Dorsolateral prefrontal cortex (tissue), 120 donors: ENCODE measurements at regions of chr17 and their contacts with region 1.

Region 1: DNA sequence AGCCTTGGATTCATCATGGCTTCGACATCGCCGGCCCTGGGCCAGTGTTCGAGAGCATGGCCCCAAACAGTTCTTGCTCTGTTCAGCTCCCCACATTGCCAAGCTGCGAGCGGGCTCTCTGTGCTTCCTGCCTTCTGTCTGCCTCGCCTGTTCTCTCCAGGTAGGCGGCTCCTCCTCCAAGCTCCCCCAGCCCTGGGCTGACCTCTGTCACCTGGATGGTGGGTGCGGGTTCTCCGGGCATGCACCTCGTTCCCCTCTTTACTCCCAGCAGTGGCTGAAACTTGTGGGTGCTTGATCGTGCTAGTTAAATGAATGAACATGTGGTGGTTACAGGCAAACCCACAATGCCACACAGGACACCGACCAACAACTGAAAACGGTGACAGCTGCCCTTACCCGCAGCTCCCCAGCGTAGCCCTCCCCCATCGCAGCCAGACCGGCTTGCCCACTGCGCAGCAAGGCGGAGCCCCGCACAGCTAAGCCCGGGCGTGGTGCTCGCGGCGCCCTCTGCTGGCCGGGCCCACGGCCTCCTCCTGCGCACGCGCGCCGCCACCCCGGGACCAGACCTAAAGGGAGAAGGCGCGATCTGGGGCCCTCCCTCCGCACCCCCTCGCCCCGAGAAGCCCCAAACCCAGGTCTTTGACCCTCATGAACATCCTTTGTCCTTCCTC is 23.0 kb upstream of the EIF1 start:
- DNase-seq: peak; percentile 73 to 94 (median 85)
- H3K4me3 ChIP-seq: peak overlapping the region; percentile 38 to 78 (median 60)
- H3K27ac ChIP-seq: peak overlapping the region in 58 of 59 donors; percentile 62 to 97 (median 88)
- H3K27me3 ChIP-seq: no peaks in the 10 kb centered on the region
- CTCF ChIP-seq: peak; percentile 81 to 100 (median 96)

Region 2: DNA sequence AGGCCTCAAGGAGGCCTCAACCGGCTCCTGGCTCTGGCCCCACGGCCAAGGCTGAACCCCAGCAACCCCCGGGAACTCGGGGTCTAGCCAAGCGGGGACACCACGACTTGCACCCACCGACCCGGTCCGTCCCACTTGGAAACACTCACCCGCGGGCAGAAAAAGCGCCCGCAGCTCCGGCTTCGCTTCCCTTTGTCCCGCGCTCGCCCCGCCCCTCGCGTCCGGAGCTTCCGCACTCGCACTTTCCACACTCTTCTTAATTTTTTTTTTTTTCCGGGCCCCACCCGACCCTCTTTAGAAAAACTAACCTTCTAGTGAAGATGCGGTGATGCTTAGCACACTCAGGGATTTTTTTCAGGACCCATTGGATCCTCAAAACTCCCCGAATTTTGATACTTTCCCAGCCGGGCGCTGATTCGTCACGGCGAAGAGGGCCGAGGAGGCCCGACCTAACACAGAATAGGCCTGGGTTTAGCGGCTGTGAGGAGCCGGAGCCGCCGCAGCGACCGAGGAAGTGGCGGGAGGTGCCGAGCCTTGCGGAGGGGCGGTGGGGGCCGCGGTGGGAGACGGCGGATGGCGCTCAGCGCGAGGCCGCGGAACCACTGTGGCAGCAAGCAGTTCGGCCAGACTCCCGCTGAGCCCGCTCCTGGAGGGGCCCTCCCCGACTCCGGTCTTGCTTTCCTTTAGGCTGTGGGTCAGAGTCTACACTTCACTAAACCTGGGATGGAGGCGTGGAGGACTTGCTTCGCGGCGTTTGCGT is 1017.9 kb before region 1 on chr17 and contains the start of gene SMARCE1:
- intact Hi-C with region 1: loop called in 1 of 2 experiments (anchors 10 kb)
- DNase-seq: peak; percentile 44 to 76 (median 61)
- H3K4me3 ChIP-seq: peak within 1 kb of the TSS; percentile 69 to 98 (median 90)
- H3K27ac ChIP-seq: peak within 1 kb of the TSS; percentile 78 to 99 (median 97)
- H3K27me3 ChIP-seq: no peaks in the 10 kb centered on the region
- CTCF ChIP-seq: peak in 22 of 56 donors; percentile 3 to 49 (median 22)
- total RNA-seq, gene SMARCE1: 34.6 to 67.5 (median 47.0) TPM

Region 3: GRCh38 chr17:40857535-40857934 is 808.2 kb before region 1 on chr17:
- intact Hi-C with region 1: loop called in 1 of 2 experiments (anchors 5 kb)
- DNase-seq: no peak
- H3K4me3 ChIP-seq: no peak overlapping the region
- H3K27ac ChIP-seq: no peak overlapping the region
- H3K27me3 ChIP-seq: peaks cover 0 to 10% (median 0%) of the 10 kb centered on the region in 45 donors
- CTCF ChIP-seq: no peak

Region 4: DNA sequence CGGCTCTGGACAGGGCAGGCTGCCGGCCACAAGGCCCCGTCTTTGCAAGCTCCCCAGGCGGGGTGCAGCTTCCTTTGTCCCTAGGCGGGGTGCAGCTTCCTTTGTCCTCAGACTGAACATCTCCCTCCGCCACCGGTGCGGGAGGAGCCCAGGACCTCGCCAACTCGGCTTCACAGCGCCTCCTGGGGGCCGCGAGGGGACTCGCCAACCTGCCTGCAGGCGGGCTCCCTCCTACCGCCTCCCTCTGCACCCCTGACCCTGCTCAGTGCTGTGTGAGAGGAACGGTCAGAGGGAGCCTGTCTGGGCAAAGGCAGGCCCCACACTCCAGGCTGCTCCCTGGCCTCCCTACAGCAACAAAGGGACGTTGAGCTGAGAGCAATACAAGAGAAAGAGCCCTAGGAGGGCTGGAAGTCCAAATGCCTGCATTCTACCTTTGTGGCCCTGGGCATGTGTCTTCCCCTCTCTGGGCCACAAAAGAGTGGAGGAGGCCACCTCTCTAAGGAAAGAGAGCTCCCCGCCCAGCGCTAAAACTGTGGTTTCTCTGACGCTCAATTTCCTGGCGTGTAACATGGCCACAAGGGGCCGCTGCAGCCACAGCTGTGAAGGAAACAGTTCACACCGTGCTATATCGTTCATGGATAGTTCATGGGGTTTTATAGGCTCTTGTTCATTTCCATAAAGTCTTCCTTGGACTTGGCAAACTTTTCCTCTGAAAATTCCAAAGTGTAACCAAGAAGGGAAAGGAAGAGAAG is 116.7 kb before region 1 on chr17:
- intact Hi-C with region 1: loop called (anchors 2 to 5 kb)
- DNase-seq: peak; percentile 65 to 86 (median 80)
- H3K4me3 ChIP-seq: peak overlapping the region in 53 of 59 donors; percentile 1 to 67 (median 34)
- H3K27ac ChIP-seq: peak overlapping the region in 33 of 59 donors; percentile 0 to 82 (median 57)
- H3K27me3 ChIP-seq: peaks cover 0 to 8% (median 0%) of the 10 kb centered on the region in 45 donors
- CTCF ChIP-seq: peak; percentile 67 to 94 (median 84)

Region 5: GRCh38 chr17:41688699-41689496 is 23.2 kb after region 1 on chr17 and contains the start of gene EIF1:
- intact Hi-C with region 1: loop called in 1 of 2 experiments (anchors 2 kb)
- DNase-seq: peak; percentile 100
- H3K4me3 ChIP-seq: peak within 1 kb of the TSS; percentile 69 to 100 (median 94)
- H3K27ac ChIP-seq: peak within 1 kb of the TSS; percentile 96 to 100 (median 100)
- H3K27me3 ChIP-seq: no peaks in the 10 kb centered on the region
- CTCF ChIP-seq: peak in 16 of 56 donors; percentile 3 to 26 (median 12)
- total RNA-seq, gene EIF1: 536 to 941 (median 703) TPM

Region 6: GRCh38 chr17:41812381-41813151 is 146.9 kb after region 1 on chr17 and contains the start of gene FKBP10:
- intact Hi-C with region 1: no loop called
- DNase-seq: peak in 3 of 10 donors; percentile 32 to 38 (median 34)
- H3K4me3 ChIP-seq: peak within 1 kb of the TSS; percentile 61 to 89 (median 75)
- H3K27ac ChIP-seq: peak within 1 kb of the TSS in 30 of 59 donors; percentile 2 to 87 (median 52)
- H3K27me3 ChIP-seq: no peaks in the 10 kb centered on the region
- CTCF ChIP-seq: no peak
- total RNA-seq, gene FKBP10: 8.8 to 66.9 (median 20.5) TPM

Region 7: GRCh38 chr17:41896726-41897125 is 231.0 kb after region 1 on chr17:
- intact Hi-C with region 1: no loop called
- DNase-seq: no peak
- H3K4me3 ChIP-seq: no peak overlapping the region
- H3K27ac ChIP-seq: no peak overlapping the region
- H3K27me3 ChIP-seq: no peaks in the 10 kb centered on the region
- CTCF ChIP-seq: no peak